CD4-positive, alpha-beta T cell (primary cell): ENCODE measurements at regions of chr2 and their contacts with region 1.

Region 1: DNA sequence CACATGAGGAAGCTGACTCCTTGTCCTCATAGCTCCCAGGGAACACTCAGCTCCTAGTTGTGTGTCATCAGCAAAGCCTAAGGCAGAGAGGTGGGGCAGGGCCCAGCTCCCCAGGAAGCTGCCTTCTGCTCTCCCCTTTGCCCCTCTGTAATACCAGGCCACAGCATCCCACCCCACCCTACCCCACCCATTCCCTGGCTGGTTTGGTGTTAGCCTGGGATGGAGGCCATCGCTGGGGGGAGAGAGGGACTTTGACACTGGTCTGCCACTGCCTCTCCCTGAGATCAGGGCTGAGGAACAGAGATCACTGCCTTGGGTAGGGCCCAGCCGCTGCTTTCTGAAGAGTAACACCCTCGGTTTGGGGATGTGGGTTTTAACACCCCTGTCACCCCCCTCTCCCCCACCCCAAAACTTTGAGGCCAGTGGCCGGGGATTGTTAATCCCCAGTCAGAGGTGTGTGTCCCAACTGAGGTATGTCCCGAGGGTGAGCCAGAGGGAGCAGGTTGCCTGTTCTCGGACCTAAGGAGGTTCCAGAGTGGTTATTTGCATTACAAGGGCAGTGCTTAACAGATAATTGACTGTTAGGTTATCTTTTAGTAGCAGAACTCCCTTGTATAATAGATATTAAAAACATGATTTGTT is 41.4 kb downstream of the TET3 start:
- DNase-seq: peak in 3 of 14 experiments; percentile 20 to 32 (median 24)
- ATAC-seq: peak; percentile 65
- H3K4me3 ChIP-seq: no peak overlapping the region
- H3K4me3 Mint-ChIP-seq: no peak overlapping the region
- H3K27ac ChIP-seq: peak overlapping the region; percentile 19 to 30
- H3K27ac Mint-ChIP-seq: peak overlapping the region; percentile 81
- H3K4me1 ChIP-seq: peaks cover 42% of the 10 kb centered on the region
- H3K4me1 Mint-ChIP-seq: peaks cover 81% of the 10 kb centered on the region
- H3K27me3 ChIP-seq: no peaks in the 10 kb centered on the region
- H3K27me3 Mint-ChIP-seq: no peaks in the 10 kb centered on the region
- CTCF ChIP-seq: no peak

Region 2: GRCh38 chr2:73134471-73134870 is 891.6 kb before region 1 on chr2:
- CTCF ChIA-PET with region 1: no interaction called
- POLR2A ChIA-PET with region 1: no interaction called
- intact Hi-C with region 1: no loop called
- DNase-seq: no peak
- ATAC-seq: no peak
- H3K4me3 ChIP-seq: no peak overlapping the region
- H3K4me3 Mint-ChIP-seq: no peak overlapping the region
- H3K27ac ChIP-seq: no peak overlapping the region
- H3K27ac Mint-ChIP-seq: no peak overlapping the region
- H3K4me1 ChIP-seq: no peaks in the 10 kb centered on the region
- H3K4me1 Mint-ChIP-seq: no peaks in the 10 kb centered on the region
- H3K27me3 ChIP-seq: no peaks in the 10 kb centered on the region
- H3K27me3 Mint-ChIP-seq: peaks cover 4% of the 10 kb centered on the region
- CTCF ChIP-seq: no peak

Region 3: DNA sequence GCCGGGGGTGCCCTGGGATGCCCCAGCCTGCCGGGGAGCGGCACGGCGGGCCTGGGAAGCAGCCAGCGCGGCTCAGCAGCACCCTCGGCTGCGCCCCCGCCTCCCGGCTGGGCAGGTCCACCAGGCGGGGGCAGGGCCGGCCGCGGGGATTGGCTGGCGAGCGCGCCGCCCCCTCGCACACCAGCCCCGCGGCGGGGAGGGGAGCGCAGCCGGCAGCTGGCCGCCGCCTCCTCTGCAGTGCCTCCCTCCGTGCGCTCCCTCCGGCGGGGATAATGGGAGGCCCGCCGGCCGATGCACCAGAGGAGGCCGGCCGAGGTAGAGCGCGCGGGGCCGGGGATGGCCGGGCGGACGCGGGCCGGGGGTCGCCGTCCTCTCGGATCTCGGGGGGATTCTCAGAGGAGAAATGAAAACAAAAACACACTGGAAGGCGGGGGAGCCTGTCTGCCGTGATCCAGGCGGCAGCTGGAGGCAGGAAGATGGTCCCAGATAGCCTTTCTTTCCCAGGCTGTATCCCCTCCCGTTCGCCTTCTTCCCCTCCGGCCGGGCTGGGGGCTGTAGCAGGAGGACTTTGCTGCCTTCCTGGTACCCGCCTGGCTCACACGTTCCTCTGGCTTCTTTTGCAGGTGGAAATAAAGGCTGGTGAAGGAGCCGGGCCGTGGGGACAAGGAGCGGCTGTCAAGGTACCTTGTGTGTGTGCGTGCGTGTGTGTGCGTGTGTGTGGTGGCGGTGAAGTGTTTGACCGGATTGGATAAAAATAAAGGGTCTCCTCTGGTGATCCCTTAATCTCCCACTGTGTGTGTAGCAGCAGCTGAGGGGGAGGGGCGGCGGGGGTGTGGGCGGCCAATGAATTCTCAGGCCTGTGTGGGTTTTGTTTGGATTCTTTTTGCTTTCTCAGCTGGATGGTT is 23.4 kb before region 1 on chr2:
- CTCF ChIA-PET with region 1: no interaction called
- POLR2A ChIA-PET with region 1: interaction called, 3 read pairs
- intact Hi-C with region 1: loop called in 1 of 2 experiments (anchors 1 kb)
- DNase-seq: peak; percentile 53 to 92 (median 77)
- ATAC-seq: peak; percentile 85
- H3K4me3 ChIP-seq: peak overlapping the region; percentile 58
- H3K4me3 Mint-ChIP-seq: peak overlapping the region; percentile 90
- H3K27ac ChIP-seq: no peak overlapping the region
- H3K27ac Mint-ChIP-seq: peak overlapping the region; percentile 68
- H3K4me1 ChIP-seq: peaks cover 67% of the 10 kb centered on the region
- H3K4me1 Mint-ChIP-seq: peaks cover 77% of the 10 kb centered on the region
- H3K27me3 ChIP-seq: no peaks in the 10 kb centered on the region
- H3K27me3 Mint-ChIP-seq: no peaks in the 10 kb centered on the region
- CTCF ChIP-seq: no peak

Region 4: DNA sequence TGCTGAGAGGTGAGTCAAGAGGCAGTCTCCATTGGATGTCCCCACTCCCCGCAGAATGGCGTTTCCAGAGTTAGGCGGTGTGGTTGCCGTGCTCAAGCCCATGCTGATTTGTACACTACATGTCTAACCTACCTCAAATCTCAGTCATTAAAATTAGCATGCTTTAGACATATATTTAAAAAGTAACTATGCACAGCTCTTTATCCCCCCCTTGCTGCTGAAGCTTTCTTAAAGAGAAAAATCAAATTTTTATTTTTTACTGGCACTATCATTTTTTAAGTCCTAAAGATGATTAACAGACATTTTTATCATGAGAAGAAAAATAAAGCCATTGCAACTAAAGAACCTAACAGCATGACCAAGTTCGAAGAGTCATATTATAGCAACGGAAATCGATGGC is 78.7 kb after region 1 on chr2:
- CTCF ChIA-PET with region 1: no interaction called
- POLR2A ChIA-PET with region 1: no interaction called
- intact Hi-C with region 1: no loop called
- DNase-seq: peak in 2 of 14 experiments; percentile 23 to 28
- ATAC-seq: peak; percentile 49
- H3K4me3 ChIP-seq: no peak overlapping the region
- H3K4me3 Mint-ChIP-seq: no peak overlapping the region
- H3K27ac ChIP-seq: no peak overlapping the region
- H3K27ac Mint-ChIP-seq: no peak overlapping the region
- H3K4me1 ChIP-seq: no peaks in the 10 kb centered on the region
- H3K4me1 Mint-ChIP-seq: no peaks in the 10 kb centered on the region
- H3K27me3 ChIP-seq: no peaks in the 10 kb centered on the region
- H3K27me3 Mint-ChIP-seq: no peaks in the 10 kb centered on the region
- CTCF ChIP-seq: no peak

Region 5: GRCh38 chr2:75180476-75180875 is 1154.4 kb after region 1 on chr2:
- CTCF ChIA-PET with region 1: no interaction called
- POLR2A ChIA-PET with region 1: no interaction called
- intact Hi-C with region 1: no loop called
- DNase-seq: no peak
- ATAC-seq: no peak
- H3K4me3 ChIP-seq: no peak overlapping the region
- H3K4me3 Mint-ChIP-seq: no peak overlapping the region
- H3K27ac ChIP-seq: no peak overlapping the region
- H3K27ac Mint-ChIP-seq: no peak overlapping the region
- H3K4me1 ChIP-seq: no peaks in the 10 kb centered on the region
- H3K4me1 Mint-ChIP-seq: no peaks in the 10 kb centered on the region
- H3K27me3 ChIP-seq: no peaks in the 10 kb centered on the region
- H3K27me3 Mint-ChIP-seq: peaks cover 13% of the 10 kb centered on the region
- CTCF ChIP-seq: no peak